HAP-1 (cell line): ENCODE measurements at regions of chr3 and their contacts with region 1.

Region 1: GRCh38 chr3:62319570-62320246 is 53.6 kb downstream of the FEZF2 start:
- DNase-seq: no peak
- H3K4me3 ChIP-seq: no peak overlapping the region
- H3K4me1 ChIP-seq: no peaks in the 10 kb centered on the region
- H3K27me3 ChIP-seq: peaks cover 17% of the 10 kb centered on the region

Region 2: DNA sequence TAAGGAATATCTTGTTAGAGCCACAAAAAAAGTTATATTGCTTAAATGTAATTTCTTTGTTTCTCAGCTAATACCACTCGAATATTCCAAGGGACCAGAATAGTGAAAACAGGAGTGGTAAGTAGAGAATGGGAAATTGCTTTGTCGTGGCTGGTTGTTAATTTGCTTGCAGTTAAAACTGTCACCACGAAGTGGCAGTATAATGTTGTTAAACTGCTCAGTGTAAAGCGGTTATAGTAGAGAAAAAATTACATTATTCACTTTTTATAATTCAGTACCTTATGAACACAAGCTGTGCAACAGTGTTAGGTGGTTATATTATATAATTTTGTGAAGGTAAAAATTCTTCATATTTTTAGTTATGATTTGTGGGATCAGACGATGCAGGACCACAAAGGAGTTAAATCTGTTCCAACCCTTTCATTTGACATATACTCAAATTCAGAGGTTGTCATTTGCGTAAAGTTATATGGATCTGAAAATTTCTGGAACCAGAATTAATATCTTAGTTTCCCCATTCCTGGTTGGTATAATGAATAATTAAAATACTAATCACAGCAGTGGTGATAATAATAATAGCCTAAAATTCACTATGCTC is 118.2 kb before region 1 on chr3:
- in situ Hi-C with region 1: loop called (anchors 10 kb)
- DNase-seq: peak; percentile 45 to 50
- H3K4me3 ChIP-seq: no peak overlapping the region
- H3K4me1 ChIP-seq: no peaks in the 10 kb centered on the region
- H3K27me3 ChIP-seq: no peaks in the 10 kb centered on the region